ENCODE measurements at regions of chr9 and their contacts with region 1.

Region 1: DNA sequence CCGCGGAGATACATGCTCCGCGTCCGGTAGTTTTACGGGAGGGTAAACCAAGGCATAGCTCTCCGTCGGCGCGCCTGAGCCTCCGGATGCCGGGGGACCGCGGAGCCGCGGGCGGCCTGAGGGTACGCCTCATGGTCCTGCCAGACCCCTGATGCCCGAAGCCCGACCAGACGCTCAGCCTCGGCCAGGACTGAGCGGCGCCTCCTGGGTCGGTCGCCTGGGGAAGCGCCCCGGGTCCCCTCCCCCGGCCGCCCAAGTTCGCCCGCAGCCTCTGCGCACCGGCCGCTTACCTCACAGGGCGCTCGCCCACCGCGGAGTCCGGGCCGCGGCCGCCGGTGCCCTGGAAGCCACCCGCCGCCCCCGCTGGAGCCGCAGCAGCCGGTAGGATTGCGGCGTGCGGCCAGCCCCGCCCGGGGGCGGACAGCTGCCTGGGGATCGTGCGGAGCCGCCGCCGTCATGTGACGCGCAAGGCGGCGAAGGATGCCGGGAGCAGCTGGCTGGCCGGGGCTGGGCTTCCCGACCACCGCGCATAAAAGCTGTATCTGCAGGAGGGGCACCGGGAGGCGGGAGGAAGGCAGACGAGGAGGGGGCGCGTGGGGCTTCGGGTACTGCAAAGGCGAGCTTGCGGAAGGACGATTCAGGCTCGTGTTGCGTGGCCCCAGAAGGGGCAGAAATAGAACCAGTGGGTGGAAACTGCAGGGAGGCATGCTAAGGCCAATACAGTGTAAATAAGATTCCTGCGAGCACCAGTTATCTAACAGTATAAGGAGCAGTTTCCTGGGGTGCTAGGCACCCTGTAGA is at the start of gene FBXO10:
- DNase-seq: no peak
- H3K4me3 ChIP-seq: peak within 1 kb of the TSS; percentile 88
- H3K27me3 ChIP-seq: no peaks in the 10 kb centered on the region
- CTCF ChIP-seq: no peak
- polyA plus RNA-seq, gene FBXO10: 10.6 and 13.3 TPM in 2 replicates

Region 2: DNA sequence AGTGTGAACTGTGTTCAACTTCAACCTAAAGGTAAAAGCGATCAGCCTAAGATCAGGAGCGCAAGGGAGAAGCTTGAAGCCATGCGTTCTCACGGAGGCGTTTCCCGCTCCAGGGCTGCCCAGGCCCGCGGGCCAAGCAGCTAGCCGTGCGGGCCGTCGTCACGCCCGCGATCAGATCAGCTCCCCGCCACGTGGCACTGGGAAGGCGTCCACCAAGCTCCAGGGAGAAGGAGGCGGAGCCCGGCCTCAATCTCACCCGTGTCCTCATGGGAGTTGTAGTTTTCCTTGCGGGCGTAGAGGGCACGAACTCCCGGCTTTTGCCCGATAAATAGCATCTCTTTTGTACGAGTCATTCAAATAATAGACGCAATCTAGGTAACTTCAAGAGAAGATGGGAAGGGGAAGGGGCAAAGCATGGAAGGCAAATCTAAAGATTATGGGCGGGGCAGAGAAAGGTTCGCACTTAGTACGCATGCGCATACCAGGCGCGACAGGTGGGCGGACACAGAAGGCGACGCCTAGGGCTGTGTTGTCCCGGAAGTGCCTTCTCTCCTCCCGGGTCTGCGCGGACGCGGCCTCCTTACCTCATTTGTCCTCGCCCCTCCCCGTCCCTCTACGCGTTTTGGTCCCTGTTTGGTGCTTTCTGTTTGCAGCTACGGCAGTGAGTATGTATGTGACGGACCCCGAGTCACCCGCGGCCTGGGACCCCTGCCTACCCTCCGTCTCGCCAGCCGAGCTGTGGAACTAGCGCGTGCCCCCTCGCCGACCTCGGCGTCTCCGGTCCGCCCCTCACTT is 496.6 kb before region 1 on chr9:
- CTCF ChIA-PET with region 1: no interaction called
- POLR2A ChIA-PET with region 1: interaction called, 11 read pairs
- DNase-seq: peak; percentile 61
- H3K4me3 ChIP-seq: peak overlapping the region; percentile 93
- H3K27me3 ChIP-seq: peaks cover 3% of the 10 kb centered on the region
- CTCF ChIP-seq: no peak

Region 3: DNA sequence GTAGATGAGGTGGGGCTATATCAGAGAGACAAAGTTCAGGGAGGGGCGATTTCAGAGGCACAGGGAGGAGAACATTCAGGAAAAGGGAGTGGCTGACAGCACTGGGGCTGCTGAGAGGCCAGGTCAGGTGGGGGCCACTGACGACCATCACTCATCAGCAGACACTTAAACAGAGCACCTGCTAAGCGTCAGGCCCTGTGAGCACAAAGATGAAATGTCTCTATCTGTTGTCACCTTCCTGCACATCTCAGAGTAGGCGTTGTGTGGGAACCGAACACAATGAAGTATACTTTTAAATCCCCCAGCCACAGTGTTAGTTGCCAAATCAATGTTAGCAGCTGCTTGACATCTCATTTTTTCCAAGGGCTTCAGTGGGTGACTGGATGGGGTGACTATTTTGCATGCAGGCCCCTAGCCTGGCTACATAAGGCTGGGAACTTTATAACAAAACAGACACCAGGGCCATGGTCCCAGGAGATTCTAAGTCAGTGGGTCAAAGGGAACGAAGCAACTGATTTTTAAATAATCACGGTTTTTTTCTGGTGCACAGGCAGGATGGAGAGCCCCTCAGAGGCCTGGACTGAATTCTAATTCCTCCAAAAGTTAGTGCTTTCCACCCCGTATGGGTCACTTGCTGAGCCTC is 1075.4 kb after region 1 on chr9:
- CTCF ChIA-PET with region 1: no interaction called
- POLR2A ChIA-PET with region 1: no interaction called
- DNase-seq: no peak
- H3K4me3 ChIP-seq: no peak overlapping the region
- H3K27me3 ChIP-seq: no peaks in the 10 kb centered on the region; the same call in 1 of the 2 replicates
- CTCF ChIP-seq: no peak